CD4-positive, alpha-beta T cell (primary cell): ENCODE measurements at regions of chr12 and their contacts with region 1.

Region 1: DNA sequence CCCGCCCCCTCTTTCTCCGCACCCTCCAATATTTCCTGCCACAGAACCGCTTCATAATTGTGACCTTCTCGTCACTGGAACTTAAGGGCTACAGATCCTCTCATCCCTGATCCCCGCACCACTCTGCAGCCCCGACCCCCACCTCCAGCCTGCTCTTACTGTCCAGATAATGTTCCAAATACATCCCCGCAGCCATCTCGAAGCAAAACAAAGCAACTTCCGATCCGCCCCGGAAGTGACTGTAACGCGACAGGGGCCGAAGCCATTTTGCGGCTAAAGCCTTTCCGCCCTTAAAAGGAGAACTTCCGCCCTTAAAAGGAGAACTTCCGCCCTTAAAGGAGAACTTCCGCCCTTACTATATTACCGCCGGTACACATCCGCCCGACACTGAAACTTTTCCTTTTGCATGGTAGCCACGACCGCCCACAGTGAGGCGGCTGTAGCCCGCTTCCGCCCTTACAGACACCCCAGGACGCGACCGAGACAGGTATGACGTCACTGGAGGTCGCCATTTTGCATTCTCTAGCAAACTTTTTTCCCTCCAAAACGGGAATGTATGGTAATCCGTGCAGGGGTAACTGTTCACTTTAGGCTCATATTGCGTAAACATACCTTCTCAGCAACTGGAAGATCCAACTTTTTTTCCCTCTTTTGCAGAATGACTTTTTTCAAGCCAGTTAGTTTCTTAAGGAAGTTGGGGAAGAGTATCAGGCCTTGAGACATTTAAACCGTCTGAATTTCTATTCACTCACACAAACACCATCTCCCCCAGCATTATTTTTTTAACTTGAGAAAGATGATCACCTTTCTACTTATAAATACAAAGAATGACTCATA is at the start of gene ING4:
- DNase-seq: peak; percentile 88 to 99 (median 94)
- ATAC-seq: peak; percentile 97
- H3K4me3 ChIP-seq: peak within 1 kb of the TSS; percentile 82
- H3K4me3 Mint-ChIP-seq: peak within 1 kb of the TSS; percentile 95
- H3K27ac ChIP-seq: peak within 1 kb of the TSS; percentile 79 to 89
- H3K27ac Mint-ChIP-seq: peak within 1 kb of the TSS; percentile 91
- H3K4me1 ChIP-seq: peaks cover 29% of the 10 kb centered on the region
- H3K4me1 Mint-ChIP-seq: peaks cover 34% of the 10 kb centered on the region
- H3K27me3 ChIP-seq: no peaks in the 10 kb centered on the region
- H3K27me3 Mint-ChIP-seq: no peaks in the 10 kb centered on the region
- CTCF ChIP-seq: no peak
- total RNA-seq, gene ING4: 13.8 to 17.4 TPM

Region 2: GRCh38 chr12:6493497-6494257 is 169.4 kb before region 1 on chr12 and contains the start of gene NCAPD2:
- CTCF ChIA-PET with region 1: no interaction called
- POLR2A ChIA-PET with region 1: no interaction called
- intact Hi-C with region 1: loop called in 1 of 2 experiments (anchors 5 kb)
- DNase-seq: peak; percentile 87 to 98 (median 92)
- ATAC-seq: peak; percentile 84
- H3K4me3 ChIP-seq: peak within 1 kb of the TSS; percentile 96
- H3K4me3 Mint-ChIP-seq: peak within 1 kb of the TSS; percentile 93
- H3K27ac ChIP-seq: peak within 1 kb of the TSS; percentile 89 to 94
- H3K27ac Mint-ChIP-seq: peak within 1 kb of the TSS; percentile 91
- H3K4me1 ChIP-seq: peaks cover 34% of the 10 kb centered on the region
- H3K4me1 Mint-ChIP-seq: peaks cover 48% of the 10 kb centered on the region
- H3K27me3 ChIP-seq: no peaks in the 10 kb centered on the region
- H3K27me3 Mint-ChIP-seq: no peaks in the 10 kb centered on the region
- CTCF ChIP-seq: no peak
- total RNA-seq, gene NCAPD2: 13.7 to 14.9 TPM

Region 3: DNA sequence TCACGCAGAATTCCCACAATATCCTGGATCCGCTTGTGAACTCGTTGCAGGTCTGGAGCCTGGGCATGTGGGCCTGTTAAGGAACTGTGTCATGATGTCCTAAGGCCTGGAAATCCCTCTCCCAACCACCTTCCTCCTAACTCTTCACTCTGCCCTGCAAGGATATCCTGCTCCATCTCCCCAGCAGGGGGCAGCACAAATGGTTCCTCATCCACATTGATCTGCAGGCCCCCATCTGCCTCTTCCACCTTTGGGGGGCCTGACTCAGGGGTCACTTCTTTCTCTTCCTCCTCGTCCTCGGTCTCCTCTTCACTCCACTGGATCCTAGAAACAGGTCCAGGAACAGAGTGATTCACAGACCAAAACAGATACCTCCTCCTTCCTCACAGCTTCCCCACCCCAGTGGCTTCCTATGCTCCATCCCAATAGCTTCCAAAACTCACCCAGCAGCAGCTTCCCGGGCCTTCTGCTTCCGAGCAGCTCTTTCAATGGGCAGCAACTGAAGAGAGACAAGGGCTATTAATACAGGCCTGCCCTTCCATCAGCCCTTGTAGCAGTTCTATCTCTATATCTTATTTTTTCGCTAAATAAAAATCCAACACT is 99.6 kb before region 1 on chr12:
- CTCF ChIA-PET with region 1: no interaction called
- POLR2A ChIA-PET with region 1: no interaction called
- intact Hi-C with region 1: loop called in 1 of 2 experiments (anchors 1 kb)
- DNase-seq: peak; percentile 51 to 80 (median 60)
- ATAC-seq: no peak
- H3K4me3 ChIP-seq: no peak overlapping the region
- H3K4me3 Mint-ChIP-seq: peak overlapping the region; percentile 69
- H3K27ac ChIP-seq: no peak overlapping the region
- H3K27ac Mint-ChIP-seq: peak overlapping the region; percentile 71
- H3K4me1 ChIP-seq: peaks cover 31% of the 10 kb centered on the region
- H3K4me1 Mint-ChIP-seq: peaks cover 48% of the 10 kb centered on the region
- H3K27me3 ChIP-seq: no peaks in the 10 kb centered on the region
- H3K27me3 Mint-ChIP-seq: no peaks in the 10 kb centered on the region
- CTCF ChIP-seq: peak; percentile 87

Region 4: DNA sequence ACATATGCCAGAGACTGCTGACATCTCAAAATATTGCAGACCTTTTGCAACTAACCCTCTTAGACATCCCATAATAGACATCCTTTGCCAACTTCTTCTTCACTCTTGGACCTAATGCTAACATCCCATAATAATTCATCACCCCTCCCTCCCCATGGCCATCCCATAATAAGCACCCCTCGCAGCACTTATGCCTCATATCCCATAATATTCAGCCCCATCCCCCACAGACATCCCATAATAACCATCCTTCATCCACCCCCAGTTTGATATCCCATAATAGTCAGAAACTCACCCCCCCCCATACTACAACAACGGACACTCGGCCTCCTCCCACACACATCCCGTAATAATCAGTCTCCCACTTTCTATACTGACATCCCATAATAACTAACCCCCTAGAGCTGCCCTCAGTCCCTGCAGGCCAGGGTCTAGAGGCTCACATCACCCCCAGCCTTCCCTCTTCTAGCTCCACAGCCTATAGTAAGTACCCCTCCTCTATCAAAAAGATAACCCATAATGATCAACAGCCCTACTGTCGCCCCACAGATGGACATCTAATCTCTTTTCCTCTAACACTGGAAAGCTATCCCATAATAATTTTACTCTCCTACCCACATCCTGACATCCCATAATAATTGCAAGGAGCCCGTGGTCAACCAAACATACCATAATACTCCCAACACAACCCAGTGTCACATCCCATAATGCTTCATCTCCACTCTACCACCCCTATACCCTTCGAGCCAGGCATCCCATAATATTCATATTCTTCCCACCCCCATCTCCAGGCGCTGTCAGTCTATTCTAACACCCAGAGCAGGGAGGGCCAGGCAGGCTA is 55.2 kb before region 1 on chr12:
- CTCF ChIA-PET with region 1: interaction called, 3 read pairs
- POLR2A ChIA-PET with region 1: interaction called, 4 read pairs
- intact Hi-C with region 1: loop called in 1 of 2 experiments (anchors 2 kb)
- DNase-seq: peak in 12 of 14 experiments; percentile 24 to 89 (median 51)
- ATAC-seq: peak; percentile 59
- H3K4me3 ChIP-seq: no peak overlapping the region
- H3K4me3 Mint-ChIP-seq: no peak overlapping the region
- H3K27ac ChIP-seq: peak overlapping the region; percentile 63 to 94
- H3K27ac Mint-ChIP-seq: no peak overlapping the region
- H3K4me1 ChIP-seq: peaks cover 71% of the 10 kb centered on the region
- H3K4me1 Mint-ChIP-seq: peaks cover 54% of the 10 kb centered on the region
- H3K27me3 ChIP-seq: no peaks in the 10 kb centered on the region
- H3K27me3 Mint-ChIP-seq: no peaks in the 10 kb centered on the region
- CTCF ChIP-seq: no peak

Region 5: GRCh38 chr12:6613776-6614512 is 49.2 kb before region 1 on chr12:
- CTCF ChIA-PET with region 1: no interaction called
- POLR2A ChIA-PET with region 1: no interaction called
- intact Hi-C with region 1: loop called (anchors 2 to 5 kb)
- DNase-seq: peak in 9 of 14 experiments; percentile 16 to 84 (median 46)
- ATAC-seq: peak; percentile 36
- H3K4me3 ChIP-seq: no peak overlapping the region
- H3K4me3 Mint-ChIP-seq: peak overlapping the region; percentile 31
- H3K27ac ChIP-seq: peak overlapping the region; percentile 40 to 47
- H3K27ac Mint-ChIP-seq: peak overlapping the region; percentile 84
- H3K4me1 ChIP-seq: peaks cover 43% of the 10 kb centered on the region
- H3K4me1 Mint-ChIP-seq: peaks cover 47% of the 10 kb centered on the region
- H3K27me3 ChIP-seq: no peaks in the 10 kb centered on the region
- H3K27me3 Mint-ChIP-seq: no peaks in the 10 kb centered on the region
- CTCF ChIP-seq: no peak

Region 6: DNA sequence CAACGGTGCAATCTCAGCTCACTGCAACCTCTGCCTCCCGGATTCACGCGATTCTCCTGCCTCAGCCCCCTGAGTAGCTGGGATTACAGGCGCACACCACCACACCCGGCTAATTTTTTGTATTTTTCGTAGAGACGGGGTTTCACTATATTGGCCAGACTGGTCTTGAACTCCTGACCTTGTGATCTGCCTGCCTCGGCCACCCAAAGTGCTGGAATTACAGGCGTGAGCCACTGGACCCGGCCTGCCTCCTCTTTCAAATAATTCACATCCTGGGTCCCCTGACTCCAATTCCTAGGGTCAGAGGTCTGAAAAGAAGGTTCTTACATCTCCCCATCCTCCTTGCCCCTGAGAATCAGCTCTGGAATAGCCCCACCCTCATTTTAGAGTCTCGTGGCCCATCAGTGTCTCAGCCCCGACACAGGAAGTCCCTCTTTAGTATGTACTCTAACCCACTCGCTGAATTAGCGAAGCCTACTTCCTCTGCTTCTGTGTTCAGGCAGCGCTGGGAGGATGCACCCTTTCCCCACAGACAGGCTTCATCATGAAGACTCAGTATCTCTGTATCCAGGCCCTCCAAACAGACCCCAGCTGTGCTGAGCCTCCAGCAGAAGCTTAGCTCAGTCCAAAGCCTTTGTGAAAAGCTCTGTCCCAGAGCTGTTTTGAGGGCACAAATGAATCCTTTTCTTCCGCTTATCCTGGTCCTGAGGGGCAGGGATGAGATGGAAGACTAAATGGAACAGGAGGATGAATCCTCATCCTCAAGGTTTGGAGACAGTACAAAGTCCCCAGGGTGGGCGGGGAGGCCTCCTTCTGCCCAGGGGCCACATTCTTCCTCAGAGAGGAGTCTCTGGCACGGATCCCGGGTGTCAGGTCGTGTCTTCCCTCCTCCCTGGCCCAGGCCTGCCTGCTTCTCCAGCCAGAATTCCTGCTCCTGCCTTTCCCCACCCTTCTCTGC is 30.8 kb before region 1 on chr12:
- CTCF ChIA-PET with region 1: no interaction called
- POLR2A ChIA-PET with region 1: interaction called, 5 read pairs
- intact Hi-C with region 1: loop called in 1 of 2 experiments (anchors 2 kb)
- DNase-seq: peak in 13 of 14 experiments; percentile 29 to 84 (median 47)
- ATAC-seq: peak; percentile 81
- H3K4me3 ChIP-seq: peak overlapping the region; percentile 51
- H3K4me3 Mint-ChIP-seq: peak overlapping the region; percentile 78
- H3K27ac ChIP-seq: peak overlapping the region; percentile 66 to 67
- H3K27ac Mint-ChIP-seq: peak overlapping the region; percentile 91
- H3K4me1 ChIP-seq: peaks cover 70% of the 10 kb centered on the region
- H3K4me1 Mint-ChIP-seq: peaks cover 63% of the 10 kb centered on the region
- H3K27me3 ChIP-seq: no peaks in the 10 kb centered on the region
- H3K27me3 Mint-ChIP-seq: no peaks in the 10 kb centered on the region
- CTCF ChIP-seq: no peak

Region 7: GRCh38 chr12:6723607-6724396 is 60.7 kb after region 1 on chr12 and contains the start of gene COPS7A:
- CTCF ChIA-PET with region 1: no interaction called
- POLR2A ChIA-PET with region 1: interaction called, 6 read pairs
- intact Hi-C with region 1: loop called (anchors 1 to 2 kb)
- DNase-seq: peak; percentile 81 to 99 (median 93)
- ATAC-seq: peak; percentile 84
- H3K4me3 ChIP-seq: peak within 1 kb of the TSS; percentile 59
- H3K4me3 Mint-ChIP-seq: peak within 1 kb of the TSS; percentile 87
- H3K27ac ChIP-seq: peak within 1 kb of the TSS; percentile 68 to 88
- H3K27ac Mint-ChIP-seq: peak within 1 kb of the TSS; percentile 83
- H3K4me1 ChIP-seq: peaks cover 18% of the 10 kb centered on the region
- H3K4me1 Mint-ChIP-seq: peaks cover 28% of the 10 kb centered on the region
- H3K27me3 ChIP-seq: no peaks in the 10 kb centered on the region
- H3K27me3 Mint-ChIP-seq: no peaks in the 10 kb centered on the region
- CTCF ChIP-seq: no peak
- total RNA-seq, gene COPS7A: 9.4 to 9.6 TPM